ENCODE measurements at regions of chr4 and their contacts with region 1.

Region 1: GRCh38 chr4:13548984-13549546 is 4.8 kb upstream of the NKX3-2 start:
- DNase-seq: peak; percentile 90
- ATAC-seq: peak; percentile 87

Region 2: GRCh38 chr4:12852338-12853307 is 696.4 kb before region 1 on chr4:
- intact Hi-C with region 1: loop called (anchors 10 kb)
- DNase-seq: no peak
- ATAC-seq: peak; percentile 89

Region 3: DNA sequence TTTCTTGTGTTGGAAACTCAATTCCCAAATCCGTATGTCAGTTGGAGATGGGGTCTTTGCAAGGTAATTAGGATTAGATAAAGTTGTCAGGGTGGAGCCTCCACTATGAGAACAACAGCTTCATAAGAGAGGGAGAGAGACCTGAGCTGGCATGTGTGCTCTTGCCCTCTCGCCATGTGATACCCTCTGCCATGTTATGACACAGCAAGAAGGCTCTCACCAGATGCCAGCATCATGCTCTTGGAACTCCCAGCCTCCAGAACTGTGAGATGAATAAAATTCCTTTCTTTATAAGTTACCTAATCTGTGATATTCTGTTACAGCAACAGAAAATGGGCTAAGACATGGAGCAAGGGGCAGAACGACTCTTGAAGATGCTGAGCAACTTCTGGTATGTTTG is 280.4 kb after region 1 on chr4:
- intact Hi-C with region 1: no loop called
- DNase-seq: no peak
- ATAC-seq: no peak